Activated CD4-positive, alpha-beta T cell treated with anti-CD3 and anti-CD28 coated beads, Interleukin-2, amount 10 ng/mL, durations not matched to agents 24 days and 14 days (primary cell): ENCODE measurements at regions of chr3 and their contacts with region 1.

Region 1: GRCh38 chr3:3134750-3135448 is 8.2 kb downstream of the TRNT1 start:
- DNase-seq: no peak
- H3K4me3 Mint-ChIP-seq: no peak overlapping the region
- H3K27ac Mint-ChIP-seq: peak overlapping the region; percentile 18
- H3K4me1 Mint-ChIP-seq: peaks cover 38% of the 10 kb centered on the region
- H3K27me3 Mint-ChIP-seq: no peaks in the 10 kb centered on the region

Region 2: DNA sequence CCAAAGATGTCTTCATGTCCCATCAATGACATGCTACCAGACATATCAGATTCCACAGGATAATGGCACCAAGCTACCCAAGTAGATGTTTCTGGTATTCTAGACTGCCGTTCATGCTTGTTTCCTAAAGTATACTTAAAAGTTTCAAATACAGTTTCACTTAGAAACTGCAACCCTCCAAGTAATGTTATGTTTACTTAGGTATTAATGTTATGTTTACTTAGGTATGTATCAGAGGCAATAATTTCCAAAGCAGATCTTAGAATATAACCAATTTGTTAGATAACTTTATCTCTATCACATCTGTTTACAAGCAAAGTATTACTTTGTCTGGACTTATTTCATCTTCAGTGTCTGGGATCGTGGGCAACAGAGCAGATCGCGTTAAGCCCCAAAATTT is 15.7 kb after region 1 on chr3:
- intact Hi-C with region 1: loop called (anchors 2 kb)
- DNase-seq: no peak
- H3K4me3 Mint-ChIP-seq: no peak overlapping the region
- H3K27ac Mint-ChIP-seq: no peak overlapping the region
- H3K4me1 Mint-ChIP-seq: peaks cover 4% of the 10 kb centered on the region
- H3K27me3 Mint-ChIP-seq: no peaks in the 10 kb centered on the region